Right lobe of liver (tissue), 6 donors: ENCODE measurements at regions of chr22 and their contacts with region 1.

Region 1: DNA sequence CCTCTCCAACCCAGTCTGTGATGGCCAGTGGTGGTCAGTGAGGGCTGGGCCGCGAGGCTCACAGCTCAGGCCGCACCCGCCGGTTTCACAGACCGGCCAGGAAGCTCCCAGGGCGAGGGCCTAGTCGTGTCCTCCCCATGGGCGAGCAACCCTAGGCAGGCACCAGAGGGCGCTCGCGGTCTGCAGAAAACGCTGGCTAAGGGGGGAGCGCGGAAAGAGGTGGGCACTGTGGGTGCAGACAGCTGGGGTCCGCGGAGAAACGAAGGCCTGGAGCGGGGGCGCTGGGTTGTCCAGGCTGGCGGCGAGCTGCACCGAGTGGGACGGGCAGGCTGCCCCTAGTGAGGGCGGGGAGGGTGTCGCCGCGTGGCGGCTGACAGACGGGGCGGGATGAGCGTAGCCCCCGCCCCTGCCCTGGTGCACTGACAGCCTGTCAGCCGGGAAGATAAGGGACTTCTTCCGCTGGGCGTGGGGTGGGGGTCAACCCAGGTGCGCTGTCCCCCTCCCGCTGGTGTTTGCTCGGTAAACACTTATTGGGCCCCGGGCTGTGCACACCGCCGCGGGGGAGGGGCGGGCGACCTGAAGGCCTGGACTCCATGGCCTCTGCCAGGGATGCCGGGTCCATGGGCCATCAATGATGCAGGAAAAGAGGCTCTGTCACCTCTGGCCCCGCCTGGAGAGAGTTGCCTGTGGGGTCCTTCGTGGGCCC is 7.5 kb downstream of the GP1BB start:
- DNase-seq: peak; percentile 85 to 86 (median 85)
- ATAC-seq: peak; percentile 87 to 94 (median 92)
- H3K4me3 ChIP-seq: peak overlapping the region; percentile 25 to 40 (median 39)
- H3K27ac ChIP-seq: no peak overlapping the region
- H3K4me1 ChIP-seq: peaks cover 0 to 7% (median 0%) of the 10 kb centered on the region in 4 donors
- H3K27me3 ChIP-seq: no peaks in the 10 kb centered on the region
- CTCF ChIP-seq: peak; percentile 90 to 96 (median 95)
- POLR2A ChIP-seq: no peak

Region 2: DNA sequence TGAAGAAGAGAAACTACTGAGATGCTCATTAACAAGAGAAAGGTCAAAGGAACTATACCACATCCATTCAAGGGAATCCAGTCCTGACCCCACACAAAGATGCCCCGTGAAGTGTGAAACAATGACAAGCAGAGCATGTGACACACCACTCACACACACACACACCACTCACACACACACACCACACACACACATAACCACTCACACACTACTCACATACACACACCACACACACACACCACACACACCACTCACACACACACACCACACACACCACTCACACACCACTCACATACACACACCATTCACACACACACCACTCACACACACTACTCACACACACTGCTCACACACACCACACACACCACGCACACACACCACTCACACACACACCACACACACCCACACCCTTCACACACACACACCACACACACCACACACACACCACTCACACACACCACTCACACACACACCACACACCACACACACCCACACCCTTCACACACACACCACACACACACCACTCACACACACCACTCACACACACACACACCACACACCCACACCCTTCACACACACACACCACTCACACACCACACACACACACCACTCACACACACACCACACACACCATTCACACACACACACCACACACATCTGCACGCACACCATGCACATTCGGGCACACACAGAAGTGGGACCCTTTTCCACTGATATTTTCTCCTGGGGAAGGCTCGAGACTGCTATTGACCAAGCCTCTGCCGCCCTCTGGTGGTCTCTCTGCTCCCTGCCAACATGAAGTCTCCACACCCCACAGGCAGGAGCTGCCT is 178.8 kb after region 1 on chr22:
- intact Hi-C with region 1: loop called (anchors 5 kb)
- DNase-seq: peak; percentile 78 to 83 (median 80)
- ATAC-seq: peak; percentile 90 to 97 (median 94)
- H3K4me3 ChIP-seq: no peak overlapping the region
- H3K27ac ChIP-seq: no peak overlapping the region
- H3K4me1 ChIP-seq: no peaks in the 10 kb centered on the region
- H3K27me3 ChIP-seq: no peaks in the 10 kb centered on the region
- CTCF ChIP-seq: peak; percentile 69 to 81 (median 77)
- POLR2A ChIP-seq: no peak